Breast epithelium (tissue), 4 donors: ENCODE measurements at regions of chr5 and their contacts with region 1.

Region 1: GRCh38 chr5:35938568-35939227 is at the start of gene CAPSL:
- DNase-seq: peak in 1 of 2 donors; percentile 43
- H3K4me3 ChIP-seq: no peak within 1 kb of the TSS
- H3K27ac ChIP-seq: no peak within 1 kb of the TSS
- H3K4me1 ChIP-seq: no peaks in the 10 kb centered on the region
- H3K27me3 ChIP-seq: no peaks in the 10 kb centered on the region
- CTCF ChIP-seq: no peak
- POLR2A ChIP-seq: no peak
- total RNA-seq, gene CAPSL: not detected

Region 2: DNA sequence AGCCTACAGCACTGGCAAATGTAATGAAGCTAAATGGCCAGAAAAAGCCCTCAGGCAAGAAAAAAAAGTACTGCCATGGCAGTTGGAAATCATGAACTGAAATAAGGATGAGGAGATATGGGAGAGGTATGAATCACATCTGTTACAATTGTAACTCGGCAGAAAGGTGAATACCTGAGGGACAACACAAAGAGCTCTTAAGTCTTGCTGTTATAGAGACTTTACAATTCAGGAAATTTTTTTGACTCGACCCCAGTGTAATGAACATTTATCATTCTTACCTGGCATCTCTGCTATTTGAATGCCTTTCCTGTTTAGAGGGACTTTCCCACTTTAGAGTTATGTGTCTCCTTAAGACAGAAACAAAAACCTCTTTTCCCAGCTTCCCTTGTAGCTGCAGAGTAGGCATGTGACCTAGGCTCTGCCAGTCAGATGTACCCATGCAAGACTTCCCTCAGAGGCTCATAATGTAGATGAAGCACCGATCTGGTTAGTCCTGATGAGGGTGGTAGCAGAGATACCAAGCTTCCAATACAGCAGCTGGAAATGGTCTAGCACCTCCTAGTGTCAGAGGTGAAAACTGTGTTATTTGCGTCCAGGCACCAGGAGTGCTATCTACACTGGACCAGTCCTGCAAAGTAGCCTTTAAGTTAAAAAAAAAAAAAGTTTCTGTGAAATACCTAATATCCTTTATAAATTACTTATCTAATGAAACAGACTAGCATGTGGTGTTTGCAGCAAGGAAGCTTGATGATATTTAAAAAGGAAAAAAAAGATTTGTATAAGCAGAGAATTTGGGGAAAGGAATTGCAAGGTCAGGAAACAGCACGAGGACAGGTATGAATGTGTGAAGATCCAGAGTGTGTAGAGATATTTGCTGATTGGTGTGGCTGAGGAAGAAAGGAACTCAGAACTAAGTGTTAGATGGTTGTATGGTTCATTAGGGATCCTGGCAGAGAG is 520.8 kb after region 1 on chr5:
- intact Hi-C with region 1: loop called (anchors 5 kb)
- DNase-seq: no peak
- H3K4me3 ChIP-seq: no peak overlapping the region
- H3K27ac ChIP-seq: no peak overlapping the region
- H3K4me1 ChIP-seq: peaks cover 0 to 2% of the 10 kb centered on the region in 2 donors
- H3K27me3 ChIP-seq: no peaks in the 10 kb centered on the region
- CTCF ChIP-seq: no peak
- POLR2A ChIP-seq: no peak